Right ventricle myocardium inferior (tissue), 1 donor: ENCODE measurements at regions of chr2 and their contacts with region 1.

Region 1: GRCh38 chr2:56183643-56184499 is at the start of gene CCDC85A:
- DNase-seq: peak; percentile 87
- ATAC-seq: peak; percentile 95
- total RNA-seq, gene CCDC85A: 5.3 TPM

Region 2: GRCh38 chr2:56314796-56315195 is 130.9 kb after region 1 on chr2:
- intact Hi-C with region 1: loop called (anchors 1 kb)
- DNase-seq: no peak
- ATAC-seq: peak; percentile 42

Region 3: DNA sequence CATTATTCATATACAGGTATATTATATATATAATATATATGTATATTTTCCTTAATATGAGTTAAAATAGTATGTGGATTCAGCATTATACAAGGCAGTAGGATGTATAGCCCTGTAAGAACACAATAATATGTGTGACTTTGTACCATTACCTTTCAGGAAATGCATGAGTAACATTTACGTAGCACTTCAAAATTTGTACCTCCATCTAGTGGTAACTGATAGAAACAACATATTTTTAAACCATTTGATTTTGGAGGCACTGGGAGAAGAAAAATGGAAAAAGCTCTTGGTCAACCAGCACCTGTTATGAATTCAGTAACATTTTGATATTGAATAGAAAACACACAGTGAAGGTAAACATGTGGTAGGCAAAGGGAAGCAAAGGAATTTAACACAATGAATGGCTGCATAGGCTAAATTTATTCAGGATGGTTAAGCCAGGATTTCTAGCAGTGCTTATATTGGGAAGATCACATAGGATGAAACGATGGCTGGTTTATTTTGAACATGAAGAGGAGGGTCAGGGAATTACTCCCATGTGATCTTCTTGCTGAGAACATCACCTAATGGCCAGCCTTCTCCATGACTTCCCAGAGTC is 565.4 kb after region 1 on chr2:
- intact Hi-C with region 1: loop called (anchors 2 kb)
- DNase-seq: no peak
- ATAC-seq: no peak

Region 4: GRCh38 chr2:57497489-57498096 is 1313.7 kb after region 1 on chr2:
- intact Hi-C with region 1: loop called (anchors 5 kb)
- DNase-seq: no peak
- ATAC-seq: no peak

Region 5: GRCh38 chr2:57516698-57517340 is 1332.9 kb after region 1 on chr2:
- intact Hi-C with region 1: loop called (anchors 5 kb)
- DNase-seq: no peak
- ATAC-seq: no peak